Activated naive CD4-positive, alpha-beta T cell treated with anti-CD3 and anti-CD28 coated beads, Interleukin-2, amount 10 ng/mL, durations not matched to agents 7 days and 5 days (primary cell): ENCODE measurements at regions of chr17 and their contacts with region 1.

Region 1: GRCh38 chr17:49556223-49556971 is 19.3 kb upstream of the NXPH3 start:
- DNase-seq: peak; percentile 87
- H3K4me3 Mint-ChIP-seq: no peak overlapping the region
- H3K27ac Mint-ChIP-seq: no peak overlapping the region
- H3K4me1 Mint-ChIP-seq: no peaks in the 10 kb centered on the region
- H3K27me3 Mint-ChIP-seq: peaks cover 17% of the 10 kb centered on the region

Region 2: DNA sequence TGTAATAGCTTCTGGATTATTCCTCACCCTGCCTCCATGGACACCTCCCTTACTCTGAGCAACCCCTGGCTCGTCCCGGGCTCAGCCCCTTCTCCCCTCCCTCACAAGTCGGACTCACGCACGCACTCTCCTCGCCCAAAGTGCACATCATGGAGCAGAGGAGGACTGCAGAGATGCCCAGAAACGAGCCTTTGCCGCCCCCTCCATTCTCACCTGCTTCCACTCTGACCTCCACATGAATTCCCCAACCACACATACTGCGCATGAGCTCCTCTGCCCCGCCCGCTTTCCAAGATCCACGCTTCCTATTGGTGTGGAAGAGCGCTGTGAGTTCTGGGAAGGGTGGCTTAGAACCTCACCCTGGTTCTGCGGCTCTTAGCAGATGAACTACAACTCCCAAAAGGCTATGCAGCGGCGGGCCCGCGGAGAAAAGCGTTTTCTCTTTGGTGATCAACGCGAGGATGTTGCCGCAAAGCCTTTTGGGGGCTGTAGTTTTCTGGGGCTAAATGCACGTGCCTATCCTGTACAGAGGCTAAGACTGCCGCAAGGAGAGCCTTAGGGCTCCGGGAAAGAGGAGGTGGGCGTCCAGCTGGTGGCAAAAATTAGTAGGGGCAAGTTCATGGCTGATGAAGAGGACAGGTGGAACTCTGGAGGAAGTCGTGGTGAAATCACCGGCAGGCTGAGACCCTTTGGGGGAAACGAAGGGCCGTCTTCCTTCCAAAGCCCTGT is 141.6 kb before region 1 on chr17 and contains the start of gene PHB1:
- CTCF ChIA-PET with region 1: interaction called, 117 read pairs
- DNase-seq: peak; percentile 99
- H3K4me3 Mint-ChIP-seq: peak within 1 kb of the TSS; percentile 98
- H3K27ac Mint-ChIP-seq: peak within 1 kb of the TSS; percentile 72
- H3K4me1 Mint-ChIP-seq: peaks cover 20% of the 10 kb centered on the region
- H3K27me3 Mint-ChIP-seq: peaks cover 23% of the 10 kb centered on the region

Region 3: GRCh38 chr17:49496183-49496866 is 60.1 kb before region 1 on chr17:
- CTCF ChIA-PET with region 1: interaction called, 40 read pairs
- DNase-seq: peak; percentile 88
- H3K4me3 Mint-ChIP-seq: peak overlapping the region; percentile 60
- H3K27ac Mint-ChIP-seq: no peak overlapping the region
- H3K4me1 Mint-ChIP-seq: peaks cover 31% of the 10 kb centered on the region
- H3K27me3 Mint-ChIP-seq: peaks cover 88% of the 10 kb centered on the region

Region 4: DNA sequence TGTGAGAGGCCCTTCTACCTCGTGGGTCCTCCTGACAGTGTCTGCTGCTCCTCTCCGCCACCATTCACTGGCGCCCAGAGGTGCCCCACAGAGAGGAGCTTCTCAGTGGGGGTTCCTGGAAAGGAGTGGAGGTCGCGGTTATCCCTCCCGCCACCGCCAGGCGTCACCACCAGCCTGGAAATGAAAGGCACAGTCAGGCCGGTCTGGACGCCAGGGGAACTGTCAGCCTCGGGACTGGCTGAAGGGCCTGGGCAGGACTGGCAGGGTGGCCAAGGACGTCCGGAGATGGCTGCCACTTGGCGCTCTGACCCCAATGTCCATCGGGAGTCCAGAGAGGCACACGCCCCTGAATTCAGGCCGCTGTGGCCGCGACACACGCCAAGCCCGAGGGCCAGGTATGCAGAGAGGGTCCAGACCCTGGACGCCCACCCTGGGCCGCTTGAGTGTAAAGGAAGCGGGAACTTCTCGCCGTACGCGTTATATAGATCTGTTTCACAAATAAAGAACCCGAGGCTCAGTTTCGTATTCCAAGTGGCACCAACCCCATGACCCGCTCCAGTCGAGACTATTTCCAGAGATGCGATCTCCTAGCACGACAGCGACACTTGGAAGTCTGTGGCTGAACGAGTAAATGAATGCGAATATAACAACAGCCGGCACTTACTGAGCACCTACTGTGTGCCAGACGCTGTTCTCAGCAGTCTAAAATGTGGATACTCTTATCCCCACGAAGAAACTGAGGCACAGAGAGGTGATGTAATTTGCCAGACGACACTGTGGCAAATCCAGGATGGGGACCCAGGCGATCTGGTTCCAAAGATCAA is 11.7 kb after region 1 on chr17:
- CTCF ChIA-PET with region 1: interaction called, 42 read pairs
- DNase-seq: peak; percentile 88
- H3K4me3 Mint-ChIP-seq: peak overlapping the region; percentile 43
- H3K27ac Mint-ChIP-seq: no peak overlapping the region
- H3K4me1 Mint-ChIP-seq: peaks cover 27% of the 10 kb centered on the region
- H3K27me3 Mint-ChIP-seq: peaks cover 66% of the 10 kb centered on the region

Region 5: DNA sequence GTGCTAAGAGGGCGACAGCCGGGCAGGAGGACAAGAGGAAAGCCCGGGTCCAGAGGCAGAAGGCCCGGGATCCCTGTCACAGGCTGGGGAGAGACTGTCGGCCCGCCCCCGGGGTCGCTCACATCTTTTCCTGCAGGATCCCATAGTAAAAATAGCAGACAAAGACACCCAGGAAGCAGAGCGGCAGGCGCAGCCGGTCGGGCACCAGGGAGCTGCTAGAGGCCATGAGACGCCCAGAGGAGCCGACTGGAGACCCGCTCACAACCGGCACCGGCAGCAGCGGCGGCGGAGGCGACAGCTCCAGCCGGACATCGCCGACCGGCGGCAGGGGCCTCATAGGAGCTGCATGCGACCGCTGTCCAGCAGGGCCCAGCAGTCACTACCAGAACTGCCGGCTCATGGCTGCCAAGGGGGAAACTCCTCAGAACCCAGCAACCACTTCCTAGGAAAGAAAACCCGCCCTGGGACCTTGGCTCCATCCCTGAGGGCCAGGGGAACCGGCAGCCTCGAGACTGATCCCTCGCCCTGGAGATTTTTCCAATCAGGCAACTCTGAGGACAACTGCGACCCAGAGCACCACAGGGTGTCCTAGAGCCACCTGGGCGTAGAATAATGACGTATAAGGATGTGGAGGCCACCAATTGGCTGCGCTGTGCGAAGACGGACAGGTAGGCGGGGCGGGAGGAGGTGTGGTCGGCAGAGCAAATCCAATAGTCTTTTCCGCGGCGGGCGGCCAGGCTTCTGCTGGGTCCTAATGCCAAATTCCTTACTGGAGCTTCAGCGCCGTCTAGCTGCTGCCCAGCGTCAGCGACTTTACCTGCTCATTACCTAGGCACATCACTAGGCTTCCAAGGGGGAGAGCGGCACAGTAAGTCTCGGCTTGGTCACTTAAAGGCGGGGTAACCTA is 151.5 kb after region 1 on chr17 and contains the start of gene SLC35B1:
- CTCF ChIA-PET with region 1: interaction called, 24 read pairs
- DNase-seq: peak; percentile 100
- H3K4me3 Mint-ChIP-seq: peak within 1 kb of the TSS; percentile 94
- H3K27ac Mint-ChIP-seq: peak within 1 kb of the TSS; percentile 95
- H3K4me1 Mint-ChIP-seq: peaks cover 51% of the 10 kb centered on the region
- H3K27me3 Mint-ChIP-seq: no peaks in the 10 kb centered on the region